Right ventricle myocardium inferior (tissue), 1 donor: ENCODE measurements at regions of chr6 and their contacts with region 1.

Region 1: DNA sequence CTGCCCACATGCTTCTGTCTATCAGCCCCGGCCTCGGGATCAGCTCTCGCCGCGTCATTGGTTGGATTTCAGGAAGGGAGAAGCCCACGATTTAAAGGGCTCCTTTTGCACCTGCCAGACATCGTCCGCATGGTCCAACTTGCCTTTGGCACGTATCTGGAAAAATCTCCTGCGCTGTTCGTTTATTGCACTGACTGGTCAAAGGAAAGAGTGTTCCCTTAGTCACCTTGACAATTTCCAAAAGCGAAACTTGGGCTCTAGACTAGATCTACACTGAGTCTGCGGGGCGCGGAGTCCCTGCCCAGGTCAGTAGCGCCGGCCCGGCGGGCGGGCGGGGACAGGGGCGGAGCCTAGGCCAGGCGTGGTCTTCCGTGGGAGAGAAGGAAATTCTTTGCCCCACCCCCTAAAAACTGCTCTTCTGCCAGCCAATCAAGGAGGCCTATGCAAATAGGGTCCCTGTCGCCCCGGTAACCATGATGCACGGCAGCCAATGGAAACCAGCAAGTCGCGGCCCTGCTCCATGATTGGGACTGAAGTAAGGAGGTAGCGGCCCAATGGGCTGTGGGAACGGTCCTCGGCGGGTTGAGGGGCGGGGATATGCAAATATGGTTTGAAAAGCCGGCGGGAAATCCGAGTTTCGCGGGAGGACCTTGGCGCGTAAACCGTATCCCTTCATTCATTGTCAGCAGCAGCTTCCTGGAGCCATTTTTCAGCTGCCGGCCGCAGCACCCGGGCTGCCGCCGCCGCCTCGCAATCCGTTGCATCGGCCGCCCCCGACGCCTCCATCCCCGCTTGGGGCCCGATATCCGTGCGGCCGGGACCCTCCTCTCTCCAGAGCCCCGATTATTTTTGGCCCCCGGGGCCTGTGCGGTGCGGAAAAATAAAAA is at the start of gene E2F3:
- DNase-seq: peak; percentile 100
- ATAC-seq: peak; percentile 97
- total RNA-seq, gene E2F3: 6.4 TPM

Region 2: GRCh38 chr6:20279608-20280287 is 121.7 kb before region 1 on chr6:
- intact Hi-C with region 1: no loop called
- DNase-seq: no peak
- ATAC-seq: no peak

Region 3: GRCh38 chr6:20291764-20292580 is 109.5 kb before region 1 on chr6:
- intact Hi-C with region 1: loop called (anchors 2 kb)
- DNase-seq: no peak
- ATAC-seq: peak; percentile 83

Region 4: DNA sequence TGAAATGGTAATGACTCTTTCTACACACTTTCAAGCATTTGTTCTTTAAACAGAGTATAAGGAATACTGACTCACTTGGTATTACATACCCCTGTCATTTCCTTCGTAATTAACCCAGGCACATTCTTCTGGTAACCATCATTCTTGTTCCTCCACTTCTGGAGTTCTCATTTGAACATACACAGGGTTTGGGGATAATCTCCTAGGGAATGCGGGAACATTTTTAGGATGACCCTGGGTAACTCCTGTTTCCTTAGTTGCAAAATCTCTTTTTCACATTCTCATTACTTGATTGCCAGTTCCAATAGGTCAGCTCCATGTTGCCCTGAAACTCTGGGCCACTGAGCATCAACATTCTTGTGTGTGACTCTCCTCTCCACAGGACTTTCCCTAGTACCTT is 51.2 kb before region 1 on chr6:
- intact Hi-C with region 1: no loop called
- DNase-seq: no peak
- ATAC-seq: no peak

Region 5: DNA sequence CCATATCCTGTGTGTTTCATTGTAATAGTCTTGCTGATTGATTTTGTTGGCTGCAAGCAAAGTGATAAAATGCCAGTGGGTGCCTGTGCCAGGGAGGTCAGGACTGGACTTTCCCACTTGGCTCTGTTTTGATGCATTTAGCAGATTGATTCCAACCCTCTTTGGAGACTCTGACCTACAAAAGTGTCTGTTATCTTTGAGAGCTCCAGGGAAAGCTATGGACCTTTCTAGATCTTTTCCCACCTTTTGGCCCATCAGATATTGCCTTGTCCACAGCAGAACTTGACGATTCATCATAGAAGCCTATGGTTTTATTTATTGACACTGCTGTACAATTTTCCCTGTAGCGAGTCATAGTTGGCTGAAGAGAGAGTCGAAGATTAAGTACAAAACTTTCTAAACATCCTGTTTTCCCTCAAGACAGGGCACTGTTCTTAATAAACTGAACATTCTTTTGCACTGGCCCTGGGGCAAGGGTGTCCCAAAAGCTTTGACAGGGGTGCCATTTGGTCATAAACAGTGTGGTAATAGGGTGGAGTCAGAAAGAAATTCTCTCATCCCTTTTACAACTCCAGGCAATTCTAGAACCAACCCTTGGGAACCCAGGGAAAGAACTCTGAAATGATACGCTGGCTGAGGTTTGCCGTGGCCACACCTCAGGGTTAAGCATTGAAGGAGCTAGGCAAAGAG is 53.9 kb after region 1 on chr6:
- intact Hi-C with region 1: no loop called
- DNase-seq: no peak
- ATAC-seq: no peak

Region 6: DNA sequence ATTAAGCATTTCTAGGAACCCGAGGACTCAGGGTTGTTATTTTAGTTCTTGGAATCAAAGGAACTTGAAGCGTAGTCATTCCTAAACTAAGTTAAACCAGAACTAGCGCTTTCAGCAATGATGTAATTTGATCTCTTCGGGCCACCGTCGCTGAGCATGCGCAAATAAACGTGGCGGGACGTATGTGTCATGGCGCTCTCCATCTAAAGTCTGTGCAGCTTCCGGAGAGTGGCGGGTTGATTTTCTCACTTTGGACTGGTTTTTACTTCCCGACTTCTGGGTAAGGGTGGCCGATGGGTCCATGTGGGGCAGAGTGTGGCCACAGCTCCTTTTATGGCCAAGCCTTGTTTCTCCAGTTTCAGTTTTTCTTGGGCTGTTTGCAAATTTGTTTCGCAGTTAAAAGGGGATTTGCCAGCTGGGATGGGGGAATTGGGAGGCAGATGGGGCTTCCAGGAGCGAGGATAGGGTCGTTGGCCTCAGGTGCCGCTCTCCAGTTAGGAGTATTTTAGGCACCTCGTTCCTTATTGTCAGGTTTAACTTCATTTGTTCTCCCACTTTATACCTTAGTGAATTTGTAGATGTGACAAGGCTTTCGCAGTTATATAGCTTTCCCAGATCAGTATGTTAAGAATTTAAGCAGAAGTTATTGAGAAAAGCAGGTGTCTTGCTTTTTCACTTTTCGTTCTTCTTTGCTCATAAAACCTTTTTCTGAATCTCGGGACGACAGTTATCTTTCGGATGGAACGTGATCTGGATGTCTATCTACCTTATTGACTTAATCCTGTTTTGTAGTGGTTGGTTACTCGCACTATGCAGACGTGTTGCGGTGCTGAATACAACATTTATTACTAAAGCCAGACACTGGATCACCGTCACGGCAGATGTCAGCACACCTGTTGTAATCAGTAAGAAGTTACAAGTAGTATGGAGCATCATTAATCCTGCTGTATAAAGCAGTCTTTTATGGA is 133.1 kb after region 1 on chr6 and contains the start of gene CDKAL1:
- intact Hi-C with region 1: loop called (anchors 5 kb)
- DNase-seq: peak; percentile 88
- ATAC-seq: peak; percentile 93
- total RNA-seq, gene CDKAL1: 11.6 TPM